ENCODE measurements at regions of chr14 and their contacts with region 1.

Region 1: DNA sequence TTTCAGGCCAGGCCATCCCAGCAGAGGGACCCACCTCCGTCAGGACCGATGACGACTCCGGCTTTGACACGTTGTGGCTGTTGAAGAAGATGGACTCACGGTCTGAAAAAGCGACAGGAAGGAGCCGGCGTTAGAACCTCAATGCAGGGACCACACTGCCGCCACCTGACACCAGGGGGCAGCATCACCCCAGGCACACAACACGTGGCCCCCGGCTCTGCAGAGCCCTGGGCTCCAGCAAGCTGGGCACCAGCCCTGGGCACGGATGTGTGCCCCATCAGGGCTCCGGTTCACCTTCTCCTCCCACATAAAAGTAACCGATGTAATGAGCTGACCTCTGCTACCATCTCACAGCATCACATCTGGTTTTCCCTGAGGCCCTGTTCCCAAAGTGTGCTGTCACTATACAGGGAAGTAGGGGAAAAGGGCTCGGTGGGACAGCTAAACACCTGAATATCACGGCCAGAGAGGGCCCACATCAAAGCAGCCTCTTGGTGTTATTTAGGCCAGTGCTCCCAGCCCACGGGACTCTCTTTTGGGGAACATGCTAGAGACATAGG is 29.0 kb downstream of the CHGA start:
- DNase-seq: peak; percentile 94
- H3K4me3 Mint-ChIP-seq: no peak overlapping the region
- H3K27ac Mint-ChIP-seq: no peak overlapping the region
- H3K4me1 Mint-ChIP-seq: peaks cover 5% of the 10 kb centered on the region
- H3K27me3 Mint-ChIP-seq: no peaks in the 10 kb centered on the region

Region 2: GRCh38 chr14:93137864-93138263 is 185.9 kb after region 1 on chr14:
- intact Hi-C with region 1: loop called (anchors 1 kb)
- DNase-seq: no peak
- H3K4me3 Mint-ChIP-seq: no peak overlapping the region
- H3K27ac Mint-ChIP-seq: no peak overlapping the region
- H3K4me1 Mint-ChIP-seq: peaks cover 4% of the 10 kb centered on the region
- H3K27me3 Mint-ChIP-seq: peaks cover 3% of the 10 kb centered on the region

Region 3: GRCh38 chr14:93175492-93175891 is 223.5 kb after region 1 on chr14:
- intact Hi-C with region 1: loop called (anchors 5 kb)
- DNase-seq: no peak
- H3K4me3 Mint-ChIP-seq: no peak overlapping the region
- H3K27ac Mint-ChIP-seq: no peak overlapping the region
- H3K4me1 Mint-ChIP-seq: peaks cover 7% of the 10 kb centered on the region
- H3K27me3 Mint-ChIP-seq: peaks cover 3% of the 10 kb centered on the region

Region 4: GRCh38 chr14:93219103-93219726 is 267.2 kb after region 1 on chr14:
- intact Hi-C with region 1: loop called (anchors 2 kb)
- DNase-seq: peak; percentile 83
- H3K4me3 Mint-ChIP-seq: no peak overlapping the region
- H3K27ac Mint-ChIP-seq: no peak overlapping the region
- H3K4me1 Mint-ChIP-seq: peaks cover 2% of the 10 kb centered on the region
- H3K27me3 Mint-ChIP-seq: no peaks in the 10 kb centered on the region

Measured in activated CD4-positive, alpha-beta T cell treated with anti-CD3 and anti-CD28 coated beads, Interleukin-2, amount 10 ng/mL, durations not matched to agents 24 days and 14 days (primary cell).